Naive thymus-derived CD4-positive, alpha-beta T cell (primary cell): ENCODE measurements at regions of chr4 and their contacts with region 1.

Region 1: GRCh38 chr4:99054428-99054994 is 34.1 kb downstream of the ADH5 start:
- DNase-seq: no peak
- ATAC-seq: no peak
- H3K4me3 ChIP-seq: no peak overlapping the region
- H3K4me3 Mint-ChIP-seq: peak overlapping the region in 1 of 10 donors; percentile 16
- H3K27ac ChIP-seq: no peak overlapping the region
- H3K27ac Mint-ChIP-seq: peak overlapping the region in 8 of 9 donors; percentile 23 to 83 (median 34)
- H3K4me1 ChIP-seq: peaks cover 4 to 6% of the 10 kb centered on the region in 2 donors
- H3K4me1 Mint-ChIP-seq: peaks cover 7 to 42% (median 13%) of the 10 kb centered on the region in 7 donors
- H3K27me3 ChIP-seq: no peaks in the 10 kb centered on the region
- H3K27me3 Mint-ChIP-seq: no peaks in the 10 kb centered on the region

Region 2: DNA sequence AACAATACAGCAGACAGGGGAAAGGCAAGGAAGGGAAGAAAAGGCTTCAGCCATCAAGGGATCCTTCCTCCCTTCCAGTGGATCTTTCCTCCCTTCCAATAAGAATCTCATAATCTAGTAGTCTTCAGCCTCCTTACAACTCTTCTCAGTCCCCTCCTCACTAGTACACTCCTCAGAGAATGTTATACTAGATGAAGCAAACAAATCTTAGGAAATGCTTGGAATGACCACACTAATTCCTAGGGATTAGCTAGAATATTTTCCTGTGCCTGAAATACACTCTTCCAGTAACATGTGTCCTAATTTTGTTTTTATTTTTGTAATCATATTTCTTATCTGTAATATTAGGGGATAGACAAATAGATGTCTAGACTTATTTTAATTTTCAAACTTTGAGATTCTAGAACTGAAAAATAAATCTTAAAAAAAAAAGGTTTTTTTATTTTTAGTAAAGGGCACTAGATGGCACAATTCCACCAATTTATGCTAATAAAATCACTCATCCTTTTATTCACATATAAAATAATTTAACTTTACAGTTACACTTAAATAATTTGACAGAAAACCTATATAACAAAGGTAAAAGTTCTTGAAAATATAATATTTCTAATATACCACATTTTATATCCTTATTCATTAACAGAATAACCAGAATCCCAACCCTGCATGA is 904.3 kb before region 1 on chr4:
- CTCF ChIA-PET with region 1: interaction called, 5 read pairs
- POLR2A ChIA-PET with region 1: no interaction called
- intact Hi-C with region 1: loop called (anchors 1 to 2 kb)
- DNase-seq: peak in 1 of 9 donors; percentile 11
- ATAC-seq: no peak
- H3K4me3 ChIP-seq: no peak overlapping the region
- H3K4me3 Mint-ChIP-seq: no peak overlapping the region
- H3K27ac ChIP-seq: no peak overlapping the region
- H3K27ac Mint-ChIP-seq: peak overlapping the region in 2 of 9 donors; percentile 5 to 68
- H3K4me1 ChIP-seq: no peaks in the 10 kb centered on the region
- H3K4me1 Mint-ChIP-seq: peaks cover 0 to 14% (median 5%) of the 10 kb centered on the region in 7 donors
- H3K27me3 ChIP-seq: no peaks in the 10 kb centered on the region
- H3K27me3 Mint-ChIP-seq: peaks cover 0 to 11% (median 0%) of the 10 kb centered on the region in 5 donors

Region 3: DNA sequence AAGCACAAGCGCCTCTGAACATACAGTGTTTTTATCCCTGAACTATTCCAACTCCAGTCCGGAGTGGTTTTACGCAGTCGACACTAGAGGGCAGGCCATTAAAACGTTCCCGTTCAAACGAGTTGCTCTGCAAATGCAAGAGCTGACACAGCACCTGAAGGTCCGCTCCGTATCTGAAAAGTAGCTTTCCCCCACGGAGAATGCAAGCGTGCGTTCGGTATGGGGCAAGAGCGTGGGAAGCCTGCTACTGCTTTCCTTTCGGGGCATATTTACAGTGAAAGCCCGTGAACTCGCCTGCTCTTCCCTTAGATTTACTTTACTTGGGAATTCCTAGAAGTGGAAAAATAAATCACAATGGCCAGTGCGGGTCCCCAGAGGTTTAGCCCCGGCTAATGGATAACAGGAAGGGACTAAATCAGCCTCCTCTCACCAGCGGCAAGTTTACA is 586.9 kb before region 1 on chr4:
- CTCF ChIA-PET with region 1: interaction called, 9 read pairs
- POLR2A ChIA-PET with region 1: no interaction called
- intact Hi-C with region 1: loop called (anchors 1 kb)
- DNase-seq: peak; percentile 14 to 76 (median 65)
- ATAC-seq: peak; percentile 93
- H3K4me3 ChIP-seq: peak overlapping the region; percentile 11
- H3K4me3 Mint-ChIP-seq: peak overlapping the region; percentile 66 to 87 (median 74)
- H3K27ac ChIP-seq: no peak overlapping the region
- H3K27ac Mint-ChIP-seq: peak overlapping the region in 3 of 9 donors; percentile 24 to 34 (median 32)
- H3K4me1 ChIP-seq: no peaks in the 10 kb centered on the region
- H3K4me1 Mint-ChIP-seq: peaks cover 7 to 40% (median 24%) of the 10 kb centered on the region in 7 donors
- H3K27me3 ChIP-seq: no peaks in the 10 kb centered on the region
- H3K27me3 Mint-ChIP-seq: no peaks in the 10 kb centered on the region

Region 4: GRCh38 chr4:99043346-99043745 is 11.2 kb before region 1 on chr4:
- CTCF ChIA-PET with region 1: interaction called, 13 read pairs
- POLR2A ChIA-PET with region 1: interaction called, 7 read pairs
- intact Hi-C with region 1: loop called (anchors 1 kb)
- DNase-seq: peak in 7 of 9 donors; percentile 22 to 79 (median 66)
- ATAC-seq: peak; percentile 93
- H3K4me3 ChIP-seq: no peak overlapping the region
- H3K4me3 Mint-ChIP-seq: peak overlapping the region in 9 of 10 donors; percentile 11 to 79 (median 64)
- H3K27ac ChIP-seq: peak overlapping the region; percentile 55
- H3K27ac Mint-ChIP-seq: peak overlapping the region; percentile 80 to 90 (median 85)
- H3K4me1 ChIP-seq: peaks cover 14 to 15% of the 10 kb centered on the region in 2 donors
- H3K4me1 Mint-ChIP-seq: peaks cover 10 to 31% (median 24%) of the 10 kb centered on the region in 7 donors
- H3K27me3 ChIP-seq: no peaks in the 10 kb centered on the region
- H3K27me3 Mint-ChIP-seq: no peaks in the 10 kb centered on the region

Region 5: GRCh38 chr4:99405433-99406115 is 351.1 kb after region 1 on chr4:
- CTCF ChIA-PET with region 1: interaction called, 5 read pairs
- POLR2A ChIA-PET with region 1: no interaction called
- intact Hi-C with region 1: loop called in 1 of 2 experiments (anchors 1 kb)
- DNase-seq: peak; percentile 13 to 62 (median 44)
- ATAC-seq: peak; percentile 86
- H3K4me3 ChIP-seq: no peak overlapping the region
- H3K4me3 Mint-ChIP-seq: no peak overlapping the region
- H3K27ac ChIP-seq: no peak overlapping the region
- H3K27ac Mint-ChIP-seq: no peak overlapping the region
- H3K4me1 ChIP-seq: no peaks in the 10 kb centered on the region
- H3K4me1 Mint-ChIP-seq: peaks cover 0 to 19% (median 0%) of the 10 kb centered on the region in 7 donors
- H3K27me3 ChIP-seq: no peaks in the 10 kb centered on the region
- H3K27me3 Mint-ChIP-seq: peaks cover 0 to 3% (median 0%) of the 10 kb centered on the region in 5 donors